Activated T-helper 2 cell treated with anti-CD3 and anti-CD28 coated beads, Interferon-gamma antibody, Interleukin-2, Interleukin-4, amounts not matched to agents 10 μg/mL and 5 μg/mL and 100 μg/mL, durations not matched to agents 14 hours and 24 hours and 36 hours (primary cell): ENCODE measurements at regions of chr1 and their contacts with region 1.

Region 1: GRCh38 chr1:151346769-151347522 is at the start of gene RFX5:
- DNase-seq: peak; percentile 95
- H3K4me3 Mint-ChIP-seq: peak within 1 kb of the TSS; percentile 94
- H3K27ac Mint-ChIP-seq: peak within 1 kb of the TSS; percentile 99
- H3K4me1 Mint-ChIP-seq: peaks cover 29% of the 10 kb centered on the region
- H3K27me3 Mint-ChIP-seq: no peaks in the 10 kb centered on the region
- total RNA-seq, gene RFX5: 68.9 and 85.5 TPM in 2 replicates

Region 2: DNA sequence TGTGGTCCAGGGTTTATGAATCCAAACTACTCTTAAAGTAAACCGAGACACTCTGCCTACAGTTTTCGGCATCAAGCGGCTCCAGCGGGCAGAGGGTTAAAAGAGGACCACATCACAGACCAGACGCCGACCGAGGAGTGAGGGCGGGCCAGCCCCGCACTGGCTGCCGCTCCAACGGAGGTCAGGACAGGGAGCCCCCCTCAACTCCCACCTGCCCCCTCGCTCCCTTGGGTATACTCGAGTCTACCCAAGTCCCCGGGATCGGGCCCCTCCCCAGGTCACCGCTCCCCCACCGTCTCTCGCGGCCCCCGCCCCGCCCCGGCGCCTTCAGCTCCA is 470.9 kb before region 1 on chr1:
- intact Hi-C with region 1: no loop called
- DNase-seq: no peak
- H3K4me3 Mint-ChIP-seq: peak overlapping the region; percentile 95
- H3K27ac Mint-ChIP-seq: peak overlapping the region; percentile 92
- H3K4me1 Mint-ChIP-seq: peaks cover 33% of the 10 kb centered on the region
- H3K27me3 Mint-ChIP-seq: no peaks in the 10 kb centered on the region

Region 3: GRCh38 chr1:151198255-151199127 is 148.5 kb before region 1 on chr1 and contains the start of gene PIP5K1A:
- intact Hi-C with region 1: loop called (anchors 5 kb)
- DNase-seq: peak; percentile 97
- H3K4me3 Mint-ChIP-seq: peak within 1 kb of the TSS; percentile 99
- H3K27ac Mint-ChIP-seq: peak within 1 kb of the TSS; percentile 93
- H3K4me1 Mint-ChIP-seq: peaks cover 28% of the 10 kb centered on the region
- H3K27me3 Mint-ChIP-seq: peaks cover 3% of the 10 kb centered on the region
- total RNA-seq, gene PIP5K1A: 82.2 and 83.9 TPM in 2 replicates

Region 4: GRCh38 chr1:151311589-151312331 is 35.2 kb before region 1 on chr1:
- intact Hi-C with region 1: loop called (anchors 2 kb)
- DNase-seq: peak; percentile 37
- H3K4me3 Mint-ChIP-seq: no peak overlapping the region
- H3K27ac Mint-ChIP-seq: peak overlapping the region; percentile 97
- H3K4me1 Mint-ChIP-seq: peaks cover 21% of the 10 kb centered on the region
- H3K27me3 Mint-ChIP-seq: no peaks in the 10 kb centered on the region

Region 5: GRCh38 chr1:151327223-151327902 is 19.6 kb before region 1 on chr1 and contains the start of gene PI4KB:
- intact Hi-C with region 1: loop called (anchors 1 kb)
- DNase-seq: peak; percentile 88
- H3K4me3 Mint-ChIP-seq: peak within 1 kb of the TSS; percentile 93
- H3K27ac Mint-ChIP-seq: peak within 1 kb of the TSS; percentile 98
- H3K4me1 Mint-ChIP-seq: peaks cover 33% of the 10 kb centered on the region
- H3K27me3 Mint-ChIP-seq: no peaks in the 10 kb centered on the region
- total RNA-seq, gene PI4KB: 53.6 and 57.3 TPM in 2 replicates

Region 6: DNA sequence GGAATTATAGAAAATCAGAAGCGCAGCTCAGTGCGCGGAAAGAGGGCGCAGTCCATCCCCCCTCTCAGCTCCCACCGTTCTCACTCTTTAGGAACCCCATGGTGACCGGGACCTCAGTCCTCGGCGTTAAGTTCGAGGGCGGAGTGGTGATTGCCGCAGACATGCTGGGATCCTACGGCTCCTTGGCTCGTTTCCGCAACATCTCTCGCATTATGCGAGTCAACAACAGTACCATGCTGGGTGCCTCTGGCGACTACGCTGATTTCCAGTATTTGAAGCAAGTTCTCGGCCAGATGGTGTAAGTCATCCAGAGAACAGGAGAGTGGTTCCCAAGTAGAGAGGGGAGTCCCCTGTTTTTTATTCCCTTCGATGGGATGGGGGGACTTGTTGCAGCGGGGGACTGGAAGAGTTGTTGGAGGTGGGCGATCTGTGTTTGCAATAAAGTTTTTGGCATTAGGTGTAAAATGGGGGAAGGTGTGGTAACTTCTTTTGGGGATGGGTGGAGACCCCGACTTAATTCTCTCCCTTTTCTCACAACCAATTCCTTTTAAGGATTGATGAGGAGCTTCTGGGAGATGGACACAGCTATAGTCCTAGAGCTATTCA is 53.0 kb after region 1 on chr1:
- intact Hi-C with region 1: loop called (anchors 1 kb)
- DNase-seq: no peak
- H3K4me3 Mint-ChIP-seq: peak overlapping the region; percentile 98
- H3K27ac Mint-ChIP-seq: peak overlapping the region; percentile 100
- H3K4me1 Mint-ChIP-seq: peaks cover 19% of the 10 kb centered on the region
- H3K27me3 Mint-ChIP-seq: no peaks in the 10 kb centered on the region